Psoas muscle (tissue), 8 donors: ENCODE measurements at regions of chr1 and their contacts with region 1.

Region 1: GRCh38 chr1:177448781-177449314 is 278.1 kb downstream of the BRINP2 start:
- DNase-seq: peak in 1 of 2 donors; percentile 55
- ATAC-seq: peak; percentile 80 to 90 (median 83)
- H3K4me3 ChIP-seq: no peak overlapping the region
- H3K27ac ChIP-seq: peak overlapping the region; percentile 83
- H3K4me1 ChIP-seq: peaks cover 43% of the 10 kb centered on the region
- H3K27me3 ChIP-seq: no peaks in the 10 kb centered on the region
- CTCF ChIP-seq: no peak

Region 2: DNA sequence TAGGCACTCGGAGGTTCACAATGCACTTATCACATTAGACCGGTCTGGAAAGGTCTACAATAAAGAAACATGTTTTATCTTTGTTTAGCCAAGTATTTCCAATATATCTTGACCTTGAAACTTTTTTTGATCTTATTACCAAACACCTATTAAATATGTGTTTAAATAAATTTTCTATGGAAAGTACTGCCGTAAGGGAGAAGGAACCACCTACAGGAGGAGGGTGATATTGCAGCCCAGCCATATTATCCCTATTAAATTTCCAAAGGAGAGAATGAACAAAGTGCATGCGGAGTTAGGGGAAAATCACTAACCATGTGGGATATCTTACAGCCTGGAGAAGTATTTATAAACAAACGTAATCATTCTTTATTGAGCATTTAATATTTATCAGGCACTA is 263.6 kb before region 1 on chr1:
- intact Hi-C with region 1: no loop called
- DNase-seq: no peak
- ATAC-seq: no peak
- H3K4me3 ChIP-seq: no peak overlapping the region
- H3K27ac ChIP-seq: no peak overlapping the region
- H3K4me1 ChIP-seq: no peaks in the 10 kb centered on the region
- H3K27me3 ChIP-seq: peaks cover 0 to 8% (median 6%) of the 10 kb centered on the region in 3 donors
- CTCF ChIP-seq: peak; percentile 29

Region 3: DNA sequence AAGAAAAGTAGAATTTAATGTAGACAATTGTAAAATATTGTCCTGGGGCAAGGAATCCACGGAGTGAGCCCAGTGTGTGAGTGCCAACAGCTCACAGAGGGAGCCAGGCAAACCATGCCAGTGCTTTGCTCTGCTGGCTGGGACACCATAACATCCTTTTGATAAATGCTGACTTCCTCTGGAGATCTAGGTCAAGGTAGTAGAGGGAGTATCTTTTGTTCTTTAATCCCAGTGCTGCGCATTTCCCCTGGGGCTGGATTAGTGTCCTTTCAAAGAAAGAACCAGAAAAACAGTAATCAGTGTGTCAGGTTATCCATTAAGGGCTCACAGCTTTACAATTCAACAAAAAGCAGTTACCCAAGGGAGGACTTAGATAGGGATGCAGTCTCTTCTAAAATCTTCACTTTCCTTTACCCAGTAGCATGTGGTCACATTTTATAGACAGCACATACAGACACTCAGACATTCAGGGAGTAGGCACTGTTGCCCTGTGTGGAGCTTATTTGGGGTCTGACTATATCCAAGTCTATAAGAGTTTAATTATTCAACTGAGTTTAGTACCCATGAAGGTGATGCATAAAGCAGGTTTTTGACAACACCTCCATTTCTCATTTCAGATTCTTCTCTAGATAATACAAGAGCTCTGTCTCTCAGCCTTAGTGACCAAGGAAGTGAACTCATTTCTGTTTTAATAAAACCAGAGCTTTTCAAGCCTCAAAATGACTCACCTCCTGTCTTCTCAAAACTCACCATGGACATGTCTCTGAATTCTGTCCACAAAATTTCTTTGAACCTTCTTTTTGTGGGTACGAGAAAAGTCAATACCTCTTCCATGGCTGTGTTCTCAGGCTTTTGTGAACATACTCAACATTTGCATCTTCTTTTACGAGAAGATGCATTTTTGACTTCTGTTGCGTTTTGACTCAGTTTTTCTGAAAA is 62.8 kb before region 1 on chr1:
- intact Hi-C with region 1: no loop called
- DNase-seq: no peak
- ATAC-seq: no peak
- H3K4me3 ChIP-seq: no peak overlapping the region
- H3K27ac ChIP-seq: no peak overlapping the region
- H3K4me1 ChIP-seq: no peaks in the 10 kb centered on the region
- H3K27me3 ChIP-seq: no peaks in the 10 kb centered on the region
- CTCF ChIP-seq: no peak

Region 4: GRCh38 chr1:177495890-177496289 is 47.0 kb after region 1 on chr1:
- intact Hi-C with region 1: loop called in 1 of 2 experiments (anchors 1 kb)
- DNase-seq: no peak
- ATAC-seq: peak in 1 of 4 donors; percentile 63
- H3K4me3 ChIP-seq: no peak overlapping the region
- H3K27ac ChIP-seq: no peak overlapping the region
- H3K4me1 ChIP-seq: no peaks in the 10 kb centered on the region
- H3K27me3 ChIP-seq: no peaks in the 10 kb centered on the region
- CTCF ChIP-seq: no peak